Activated CD8-positive, alpha-beta memory T cell treated with anti-CD3 and anti-CD28 coated beads, Interleukin-2, amount 10 ng/mL, durations not matched to agents 7 days and 5 days (primary cell): ENCODE measurements at regions of chr7 and their contacts with region 1.

Region 1: GRCh38 chr7:31122649-31123058 is 70.5 kb downstream of the ADCYAP1R1 start:
- DNase-seq: peak; percentile 59
- ATAC-seq: peak; percentile 42
- H3K4me3 Mint-ChIP-seq: no peak overlapping the region
- H3K27ac Mint-ChIP-seq: no peak overlapping the region
- H3K4me1 Mint-ChIP-seq: no peaks in the 10 kb centered on the region
- H3K27me3 Mint-ChIP-seq: peaks cover 29% of the 10 kb centered on the region

Region 2: DNA sequence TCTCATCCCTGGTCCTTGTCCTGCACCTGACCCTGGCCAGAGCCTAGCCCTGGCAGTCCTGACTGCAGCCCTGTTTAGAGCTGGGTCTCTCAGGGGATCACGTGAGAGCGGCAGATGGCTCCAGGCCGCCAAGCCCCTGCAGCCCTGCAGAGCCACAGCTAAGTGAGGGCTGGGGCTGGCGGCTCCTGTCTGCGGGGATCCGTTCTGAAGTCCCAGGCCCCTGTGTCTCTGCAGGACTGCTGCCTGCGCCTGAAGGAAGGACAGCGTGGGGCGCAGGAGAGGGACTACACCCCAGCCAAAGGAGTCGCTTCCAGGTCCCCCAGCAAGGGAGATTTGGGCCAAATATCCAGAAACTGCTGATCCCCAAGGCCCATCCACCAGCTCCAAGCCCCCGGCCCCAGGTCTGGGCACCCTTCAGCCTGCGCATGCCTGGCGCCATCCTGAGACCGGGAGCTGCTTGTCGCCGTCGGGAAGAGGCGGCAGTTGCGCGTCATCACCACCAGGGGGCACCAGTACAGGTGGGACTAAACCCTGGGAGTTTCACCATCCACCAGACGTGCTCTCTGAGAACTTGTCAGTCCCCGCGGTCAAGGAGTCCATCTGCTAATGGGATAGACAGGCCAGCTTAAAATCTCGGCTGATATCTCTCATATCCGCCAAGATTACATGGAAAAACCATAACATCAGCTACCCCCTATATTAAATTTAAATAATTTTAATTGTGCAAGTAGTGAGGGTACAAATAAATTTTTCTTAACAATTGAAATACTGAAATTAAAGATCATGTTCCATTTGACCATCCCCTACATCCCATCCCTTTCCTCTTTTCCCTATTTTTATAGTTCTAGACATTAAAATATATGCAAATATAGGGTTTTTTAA is 184.0 kb before region 1 on chr7:
- CTCF ChIA-PET with region 1: interaction called, 12 read pairs
- DNase-seq: peak; percentile 73
- ATAC-seq: peak; percentile 63
- H3K4me3 Mint-ChIP-seq: no peak overlapping the region
- H3K27ac Mint-ChIP-seq: no peak overlapping the region
- H3K4me1 Mint-ChIP-seq: no peaks in the 10 kb centered on the region
- H3K27me3 Mint-ChIP-seq: peaks cover 43% of the 10 kb centered on the region

Region 3: DNA sequence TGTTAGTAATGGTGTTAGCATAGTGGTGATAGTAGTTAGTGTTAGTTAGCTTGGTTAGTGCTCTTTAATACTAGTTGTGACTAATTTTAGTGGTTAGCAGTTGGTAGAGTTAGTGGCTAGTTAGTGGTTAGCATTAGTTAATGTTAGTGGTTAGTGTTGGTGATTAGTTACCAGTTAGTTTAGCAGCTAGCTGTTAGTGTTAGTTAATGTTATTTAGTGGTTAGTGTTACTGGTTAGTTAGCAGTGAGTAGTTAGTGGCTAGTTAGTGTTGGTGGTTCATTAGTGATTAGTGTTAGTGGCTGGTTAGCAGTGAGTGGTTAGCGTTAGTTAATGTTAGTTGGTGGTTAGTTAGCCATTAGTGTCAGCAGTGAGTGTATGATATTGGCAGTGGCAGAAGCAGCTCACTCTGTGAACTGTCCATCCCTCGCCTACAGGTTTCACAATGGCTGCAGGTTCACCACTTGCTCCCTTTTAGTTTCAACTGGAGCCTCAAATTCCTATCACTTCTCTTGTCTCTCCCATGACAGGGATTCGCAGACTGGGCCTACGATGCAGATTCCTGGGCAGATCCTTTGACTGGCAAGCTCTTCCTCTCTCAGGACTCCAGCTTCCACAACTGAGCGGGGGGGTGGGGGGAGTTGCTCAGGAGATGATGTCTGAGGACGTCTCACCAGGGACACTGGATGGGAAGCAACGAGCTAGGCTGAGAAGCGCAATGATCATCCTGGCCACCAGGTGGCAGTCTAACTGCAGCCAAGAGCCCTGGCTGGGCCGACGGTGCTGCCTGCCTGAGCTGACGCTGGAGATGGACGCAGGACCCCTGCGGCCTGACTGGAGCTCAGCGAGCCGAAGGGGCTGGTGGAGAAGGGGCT is 139.4 kb before region 1 on chr7:
- CTCF ChIA-PET with region 1: interaction called, 243 read pairs
- DNase-seq: peak; percentile 81
- ATAC-seq: peak; percentile 84
- H3K4me3 Mint-ChIP-seq: no peak overlapping the region
- H3K27ac Mint-ChIP-seq: no peak overlapping the region
- H3K4me1 Mint-ChIP-seq: peaks cover 5% of the 10 kb centered on the region
- H3K27me3 Mint-ChIP-seq: peaks cover 15% of the 10 kb centered on the region

Region 4: DNA sequence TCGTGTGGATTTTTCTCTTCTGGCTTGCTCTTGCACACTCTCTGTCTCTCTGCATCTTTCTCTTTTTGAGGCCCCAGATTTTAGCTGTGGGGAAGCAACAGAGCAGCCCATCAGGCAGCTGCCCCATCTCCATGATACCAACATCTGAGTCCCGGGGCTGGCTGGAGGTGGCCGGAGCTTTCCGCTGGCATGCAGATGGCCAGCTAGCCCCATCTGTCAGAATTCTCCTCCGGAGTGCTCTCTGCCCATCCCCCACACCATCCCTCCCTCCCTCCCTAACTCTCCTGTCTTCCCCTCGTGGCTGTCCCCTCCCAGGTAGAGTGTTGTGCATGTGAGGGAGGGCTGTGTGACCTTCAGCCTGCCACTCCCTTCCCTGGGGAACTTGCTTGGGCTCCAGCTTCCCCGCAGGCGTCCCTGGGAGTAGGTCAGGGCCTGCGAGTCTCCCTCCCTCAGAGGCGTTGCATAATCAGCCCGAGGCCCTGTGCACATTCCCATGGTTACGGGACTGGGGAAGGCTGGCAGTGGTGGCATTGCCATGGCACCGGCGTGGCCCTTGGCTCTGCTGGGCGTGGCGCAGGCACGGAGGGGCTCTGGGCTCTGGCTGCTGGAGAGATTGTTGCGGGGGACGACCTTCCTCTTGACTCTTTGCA is 134.2 kb before region 1 on chr7:
- CTCF ChIA-PET with region 1: interaction called, 243 read pairs
- DNase-seq: no peak
- ATAC-seq: no peak
- H3K4me3 Mint-ChIP-seq: no peak overlapping the region
- H3K27ac Mint-ChIP-seq: no peak overlapping the region
- H3K4me1 Mint-ChIP-seq: peaks cover 4% of the 10 kb centered on the region
- H3K27me3 Mint-ChIP-seq: peaks cover 14% of the 10 kb centered on the region

Region 5: DNA sequence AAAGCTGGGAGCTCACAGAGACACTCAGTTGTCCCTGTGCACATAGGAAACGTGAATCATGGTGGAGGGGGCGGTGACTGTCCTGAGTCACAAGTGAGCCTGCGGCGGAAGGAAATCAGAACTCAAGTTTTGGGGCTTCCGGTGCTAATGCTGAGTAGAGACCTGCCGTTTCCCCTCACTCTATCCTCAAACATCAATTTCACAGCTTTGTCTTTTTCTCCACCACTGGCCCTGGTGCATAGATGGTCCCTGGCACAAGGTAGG is 48.6 kb before region 1 on chr7:
- CTCF ChIA-PET with region 1: no interaction called
- DNase-seq: no peak
- ATAC-seq: no peak
- H3K4me3 Mint-ChIP-seq: no peak overlapping the region
- H3K27ac Mint-ChIP-seq: no peak overlapping the region
- H3K4me1 Mint-ChIP-seq: no peaks in the 10 kb centered on the region
- H3K27me3 Mint-ChIP-seq: peaks cover 2% of the 10 kb centered on the region

Region 6: GRCh38 chr7:31134246-31135188 is 11.9 kb after region 1 on chr7:
- CTCF ChIA-PET with region 1: interaction called, 64 read pairs
- DNase-seq: peak; percentile 61
- ATAC-seq: peak; percentile 70
- H3K4me3 Mint-ChIP-seq: no peak overlapping the region
- H3K27ac Mint-ChIP-seq: no peak overlapping the region
- H3K4me1 Mint-ChIP-seq: peaks cover 2% of the 10 kb centered on the region
- H3K27me3 Mint-ChIP-seq: peaks cover 3% of the 10 kb centered on the region